ENCODE measurements at regions of chr2 and their contacts with region 1.

Region 1: DNA sequence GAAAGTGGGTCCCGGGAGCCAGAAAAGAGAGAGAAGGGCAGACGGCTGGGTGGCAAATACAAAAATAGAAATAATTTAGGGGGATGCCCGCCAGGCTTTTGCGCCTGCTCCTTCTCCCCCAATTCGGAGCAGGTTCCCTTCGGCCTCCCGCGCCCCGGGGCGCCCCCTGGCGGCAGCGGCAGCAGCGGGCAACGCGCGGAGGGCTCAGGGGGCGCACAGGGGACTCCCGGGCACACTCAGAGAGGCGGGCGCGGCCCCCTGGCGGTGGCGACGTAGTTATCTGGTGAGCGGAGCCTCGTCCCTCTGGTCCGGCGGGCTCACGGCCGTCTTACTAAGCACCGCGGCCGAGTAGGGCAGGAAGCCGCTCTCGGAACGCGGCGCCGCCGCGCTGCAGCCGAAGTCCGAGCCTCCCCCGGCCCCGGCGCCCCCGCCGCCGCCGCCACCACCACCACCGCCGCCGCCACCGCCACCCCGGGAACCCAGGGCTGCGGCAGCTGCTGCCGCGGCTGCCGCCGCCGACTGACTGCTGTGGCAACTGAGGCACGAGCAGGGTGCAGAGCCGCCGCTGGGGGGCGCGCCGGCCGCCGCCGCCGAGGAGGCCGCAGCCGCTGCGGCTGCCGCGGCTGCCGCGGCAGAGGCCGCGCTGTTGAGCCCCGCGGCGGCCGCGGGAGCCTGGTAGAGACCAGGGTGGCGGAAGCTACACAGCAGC is 3.8 kb downstream of the EVX2 start:
- DNase-seq: no peak
- H3K4me3 Mint-ChIP-seq: peak overlapping the region; percentile 49
- H3K27ac Mint-ChIP-seq: no peak overlapping the region
- H3K4me1 Mint-ChIP-seq: peaks cover 17% of the 10 kb centered on the region
- H3K27me3 Mint-ChIP-seq: peaks cover 77% of the 10 kb centered on the region

Region 2: GRCh38 chr2:176018708-176019107 is 61.3 kb before region 1 on chr2:
- CTCF ChIA-PET with region 1: no interaction called
- intact Hi-C with region 1: no loop called
- DNase-seq: no peak
- H3K4me3 Mint-ChIP-seq: no peak overlapping the region
- H3K27ac Mint-ChIP-seq: no peak overlapping the region
- H3K4me1 Mint-ChIP-seq: no peaks in the 10 kb centered on the region
- H3K27me3 Mint-ChIP-seq: peaks cover 16% of the 10 kb centered on the region

Region 3: DNA sequence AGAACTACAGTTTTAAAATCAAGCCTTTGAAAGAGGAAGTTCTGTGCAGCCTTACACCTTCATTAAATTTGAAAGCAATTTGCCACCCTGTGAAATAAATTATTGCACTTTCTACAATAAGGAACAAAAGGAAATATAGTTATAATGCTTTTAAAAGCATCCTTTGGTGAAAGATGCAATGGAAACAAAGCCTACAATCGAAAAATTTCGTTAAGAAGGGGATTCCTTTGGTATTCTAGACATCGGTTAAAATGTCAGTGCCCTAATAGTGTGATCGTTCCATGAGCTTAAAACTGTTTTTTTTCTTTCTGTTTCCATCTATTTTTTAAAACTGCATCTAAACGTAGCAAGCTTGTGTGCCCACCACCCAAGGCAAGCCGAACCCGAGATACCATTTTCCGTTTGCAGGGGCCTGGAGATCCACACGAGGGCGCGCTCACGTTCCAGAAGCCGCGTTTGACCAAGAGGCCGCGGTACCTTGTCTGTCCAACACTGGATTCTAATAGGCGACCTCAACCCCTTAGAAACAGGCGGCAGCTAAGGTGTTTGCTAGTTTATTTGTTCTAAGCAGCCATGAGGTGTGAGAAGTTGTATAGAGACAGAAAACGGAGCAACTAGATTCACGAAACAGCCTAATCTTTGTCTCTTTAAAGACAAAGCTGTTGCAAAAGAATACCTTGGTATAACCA is 31.1 kb after region 1 on chr2:
- CTCF ChIA-PET with region 1: no interaction called
- intact Hi-C with region 1: loop called (anchors 5 kb)
- DNase-seq: no peak
- H3K4me3 Mint-ChIP-seq: no peak overlapping the region
- H3K27ac Mint-ChIP-seq: no peak overlapping the region
- H3K4me1 Mint-ChIP-seq: peaks cover 17% of the 10 kb centered on the region
- H3K27me3 Mint-ChIP-seq: peaks cover 80% of the 10 kb centered on the region

Region 4: DNA sequence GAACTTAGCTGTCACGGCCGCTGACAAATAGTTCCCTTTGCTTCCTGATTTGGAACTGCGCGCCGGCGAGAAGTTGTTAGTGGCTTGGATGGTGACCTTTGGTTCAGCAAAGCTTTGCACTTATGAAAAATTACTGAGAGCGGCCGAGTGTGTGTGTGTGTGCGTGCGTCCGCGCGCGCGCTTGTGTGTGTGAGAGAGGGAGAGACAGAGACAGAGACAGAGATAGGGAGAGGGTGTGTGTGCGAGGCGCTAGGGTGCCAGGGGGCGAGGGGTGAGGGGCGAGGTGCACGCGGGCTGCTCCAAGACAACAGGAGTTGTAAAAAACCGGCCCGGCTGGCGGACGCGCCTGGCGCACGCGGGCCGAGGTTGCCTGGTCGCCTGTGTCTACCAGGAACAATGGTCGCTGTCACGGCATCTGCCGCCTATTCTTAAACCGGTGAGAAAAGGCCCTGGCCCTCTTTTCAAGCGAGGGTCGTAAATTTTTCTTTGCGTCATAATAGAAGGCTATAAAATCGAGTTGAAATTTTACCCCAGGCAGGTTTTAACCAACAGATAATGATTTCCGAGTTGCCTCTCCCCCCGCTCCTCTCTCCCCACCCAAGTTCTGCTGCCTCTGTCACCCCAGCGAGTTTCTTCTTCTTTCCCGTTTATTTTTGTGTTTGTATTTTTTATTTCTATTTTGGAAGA is 77.7 kb after region 1 on chr2:
- CTCF ChIA-PET with region 1: no interaction called
- intact Hi-C with region 1: loop called (anchors 2 kb)
- DNase-seq: no peak
- H3K4me3 Mint-ChIP-seq: peak overlapping the region; percentile 32
- H3K27ac Mint-ChIP-seq: no peak overlapping the region
- H3K4me1 Mint-ChIP-seq: peaks cover 26% of the 10 kb centered on the region
- H3K27me3 Mint-ChIP-seq: peaks cover 74% of the 10 kb centered on the region

Region 5: GRCh38 chr2:176164611-176165369 is 84.8 kb after region 1 on chr2:
- CTCF ChIA-PET with region 1: no interaction called
- intact Hi-C with region 1: loop called (anchors 2 kb)
- DNase-seq: no peak
- H3K4me3 Mint-ChIP-seq: no peak overlapping the region
- H3K27ac Mint-ChIP-seq: no peak overlapping the region
- H3K4me1 Mint-ChIP-seq: peaks cover 14% of the 10 kb centered on the region
- H3K27me3 Mint-ChIP-seq: peaks cover 77% of the 10 kb centered on the region

Measured in activated naive CD4-positive, alpha-beta T cell treated with anti-CD3 and anti-CD28 coated beads for 36 hours (primary cell).